CD14-positive monocyte (primary cell): ENCODE measurements at regions of chr5 and their contacts with region 1.

Region 1: DNA sequence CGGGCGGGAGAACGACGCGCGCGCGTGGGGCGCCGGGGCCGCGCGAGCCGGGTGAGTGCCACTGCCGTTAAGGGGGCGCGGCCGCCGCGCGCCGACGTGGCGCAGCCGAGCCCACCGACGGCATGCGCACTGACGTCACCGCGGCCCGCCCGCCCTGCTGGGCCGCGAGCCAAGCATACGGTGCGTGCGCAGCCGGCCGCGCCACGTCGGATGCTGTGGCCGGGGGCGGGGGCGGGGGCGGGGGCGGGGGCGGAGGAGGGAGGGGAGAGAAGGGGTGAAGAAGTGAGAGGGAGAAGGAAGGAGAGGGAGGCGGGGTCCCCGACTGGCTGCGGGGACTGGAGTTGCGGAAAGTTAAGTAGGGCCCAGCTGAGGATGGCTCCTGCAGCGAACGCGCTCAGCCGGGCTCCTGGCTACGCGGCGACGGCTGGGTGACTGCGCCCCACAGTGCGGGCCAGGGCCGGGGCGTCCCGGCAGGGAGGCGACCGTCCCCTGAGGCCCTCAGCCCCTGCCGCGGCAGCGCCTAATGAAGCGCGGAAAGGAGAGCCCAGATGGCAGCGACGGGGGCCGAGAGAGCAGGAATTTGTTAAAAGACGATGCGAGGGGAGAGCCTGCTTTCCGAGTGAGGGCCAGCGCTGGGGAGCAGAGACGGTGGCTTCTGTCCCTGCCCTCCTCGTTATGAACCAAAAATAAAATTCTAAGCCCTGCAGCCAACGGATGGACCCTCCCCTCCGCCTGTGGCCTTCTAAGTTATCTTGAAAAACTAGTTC is at the start of gene DAP:
- DNase-seq: peak; percentile 88 to 91 (median 90)
- H3K4me3 ChIP-seq: peak within 1 kb of the TSS; percentile 71 to 97 (median 85)
- H3K4me3 Mint-ChIP-seq: peak within 1 kb of the TSS; percentile 90 to 97
- H3K27ac ChIP-seq: peak within 1 kb of the TSS; percentile 94 to 99
- H3K27ac Mint-ChIP-seq: peak within 1 kb of the TSS; percentile 98 to 99 (median 98)
- H3K4me1 ChIP-seq: peaks cover 43 to 46% of the 10 kb centered on the region in 2 donors
- H3K4me1 Mint-ChIP-seq: peaks cover 51% of the 10 kb centered on the region
- H3K27me3 ChIP-seq: no peaks in the 10 kb centered on the region
- H3K27me3 Mint-ChIP-seq: peaks cover 0 to 2% (median 1%) of the 10 kb centered on the region in 3 donors
- CTCF ChIP-seq: no peak
- polyA plus RNA-seq, gene DAP: 60.9 to 69.0 (median 62.3) TPM

Region 2: GRCh38 chr5:10384483-10384882 is 376.9 kb before region 1 on chr5:
- intact Hi-C with region 1: no loop called
- DNase-seq: no peak
- H3K4me3 ChIP-seq: no peak overlapping the region
- H3K4me3 Mint-ChIP-seq: no peak overlapping the region
- H3K27ac ChIP-seq: no peak overlapping the region
- H3K27ac Mint-ChIP-seq: no peak overlapping the region
- H3K4me1 ChIP-seq: no peaks in the 10 kb centered on the region
- H3K4me1 Mint-ChIP-seq: peaks cover 9% of the 10 kb centered on the region
- H3K27me3 ChIP-seq: no peaks in the 10 kb centered on the region
- H3K27me3 Mint-ChIP-seq: peaks cover 0 to 1% (median 0%) of the 10 kb centered on the region in 3 donors
- CTCF ChIP-seq: no peak

Region 3: GRCh38 chr5:10452768-10453331 is 308.5 kb before region 1 on chr5:
- intact Hi-C with region 1: loop called in 1 of 2 experiments (anchors 5 kb)
- DNase-seq: peak; percentile 54 to 68 (median 64)
- H3K4me3 ChIP-seq: no peak overlapping the region
- H3K4me3 Mint-ChIP-seq: no peak overlapping the region
- H3K27ac ChIP-seq: no peak overlapping the region
- H3K27ac Mint-ChIP-seq: peak overlapping the region in 2 of 7 donors; percentile 45 to 61
- H3K4me1 ChIP-seq: peaks cover 57 to 62% of the 10 kb centered on the region in 2 donors
- H3K4me1 Mint-ChIP-seq: peaks cover 61% of the 10 kb centered on the region
- H3K27me3 ChIP-seq: no peaks in the 10 kb centered on the region
- H3K27me3 Mint-ChIP-seq: peaks cover 0 to 2% (median 2%) of the 10 kb centered on the region in 3 donors
- CTCF ChIP-seq: peak; percentile 72

Region 4: GRCh38 chr5:10635257-10635866 is 126.0 kb before region 1 on chr5:
- intact Hi-C with region 1: loop called (anchors 5 to 10 kb)
- DNase-seq: peak; percentile 93 to 97 (median 97)
- H3K4me3 ChIP-seq: peak overlapping the region in 1 of 3 experiments; percentile 38
- H3K4me3 Mint-ChIP-seq: peak overlapping the region; percentile 7 to 57
- H3K27ac ChIP-seq: peak overlapping the region; percentile 38 to 98
- H3K27ac Mint-ChIP-seq: peak overlapping the region; percentile 81 to 99 (median 87)
- H3K4me1 ChIP-seq: peaks cover 54 to 58% of the 10 kb centered on the region in 2 donors
- H3K4me1 Mint-ChIP-seq: peaks cover 57% of the 10 kb centered on the region
- H3K27me3 ChIP-seq: no peaks in the 10 kb centered on the region
- H3K27me3 Mint-ChIP-seq: peaks cover 2 to 12% (median 2%) of the 10 kb centered on the region in 3 donors
- CTCF ChIP-seq: no peak

Region 5: DNA sequence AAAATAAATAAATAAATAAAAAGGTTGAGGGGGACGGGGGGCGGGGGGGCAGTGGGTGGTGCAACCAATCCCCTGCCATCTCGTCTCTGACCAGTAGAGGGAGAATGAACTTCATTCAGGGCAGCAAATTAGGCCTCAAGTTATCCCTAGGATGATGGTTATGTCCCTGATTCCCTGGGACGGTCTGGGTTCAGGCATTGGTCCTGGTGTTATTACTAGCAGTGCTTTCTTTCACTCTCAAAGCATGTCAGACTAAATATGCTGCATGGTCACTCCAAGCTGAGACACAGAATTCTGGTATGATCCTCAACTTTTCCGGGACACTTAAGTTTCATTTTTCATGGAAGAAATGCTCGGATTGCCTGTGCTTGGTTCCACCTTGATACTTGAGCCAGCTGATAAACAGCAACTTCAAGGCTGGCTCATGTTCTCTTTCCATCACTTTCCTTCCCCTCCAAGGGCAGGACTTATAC is 59.7 kb before region 1 on chr5:
- intact Hi-C with region 1: loop called in 1 of 2 experiments (anchors 5 kb)
- DNase-seq: peak; percentile 21 to 47 (median 41)
- H3K4me3 ChIP-seq: no peak overlapping the region
- H3K4me3 Mint-ChIP-seq: no peak overlapping the region
- H3K27ac ChIP-seq: no peak overlapping the region
- H3K27ac Mint-ChIP-seq: peak overlapping the region in 2 of 7 donors; percentile 25 to 49
- H3K4me1 ChIP-seq: peaks cover 18 to 23% of the 10 kb centered on the region in 2 donors
- H3K4me1 Mint-ChIP-seq: peaks cover 24% of the 10 kb centered on the region
- H3K27me3 ChIP-seq: no peaks in the 10 kb centered on the region
- H3K27me3 Mint-ChIP-seq: peaks cover 0 to under 1% (median 0%) of the 10 kb centered on the region in 3 donors
- CTCF ChIP-seq: peak; percentile 90

Region 6: GRCh38 chr5:10733426-10733825 is 27.9 kb before region 1 on chr5:
- intact Hi-C with region 1: loop called in 1 of 2 experiments (anchors 2 kb)
- DNase-seq: no peak
- H3K4me3 ChIP-seq: no peak overlapping the region
- H3K4me3 Mint-ChIP-seq: no peak overlapping the region
- H3K27ac ChIP-seq: peak overlapping the region in 1 of 2 donors; percentile 77
- H3K27ac Mint-ChIP-seq: peak overlapping the region; percentile 70 to 92 (median 89)
- H3K4me1 ChIP-seq: peaks cover 29 to 37% of the 10 kb centered on the region in 2 donors
- H3K4me1 Mint-ChIP-seq: peaks cover 59% of the 10 kb centered on the region
- H3K27me3 ChIP-seq: no peaks in the 10 kb centered on the region
- H3K27me3 Mint-ChIP-seq: peaks cover 0 to 2% (median 0%) of the 10 kb centered on the region in 3 donors
- CTCF ChIP-seq: no peak

Region 7: DNA sequence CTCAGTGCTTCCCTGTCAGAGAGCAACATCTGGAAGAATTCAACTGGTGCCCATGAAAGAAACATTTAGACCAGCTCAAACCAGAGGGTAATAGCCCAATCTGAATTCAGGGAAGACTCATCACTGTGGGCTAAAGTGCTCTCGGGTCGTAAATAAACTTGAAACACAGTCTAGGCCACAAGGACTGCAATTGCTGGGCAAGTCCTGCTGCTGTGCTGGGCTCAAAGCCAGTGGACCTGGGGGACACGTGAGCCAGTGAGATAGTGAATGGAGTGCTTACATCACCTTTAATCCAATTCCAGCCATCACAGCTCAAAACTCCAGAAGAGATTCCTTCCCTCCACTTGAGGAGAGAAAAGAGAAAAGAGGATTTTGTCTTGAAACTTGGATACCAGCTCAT is 77.8 kb after region 1 on chr5:
- intact Hi-C with region 1: no loop called
- DNase-seq: no peak
- H3K4me3 ChIP-seq: no peak overlapping the region
- H3K4me3 Mint-ChIP-seq: no peak overlapping the region
- H3K27ac ChIP-seq: no peak overlapping the region
- H3K27ac Mint-ChIP-seq: no peak overlapping the region
- H3K4me1 ChIP-seq: no peaks in the 10 kb centered on the region
- H3K4me1 Mint-ChIP-seq: no peaks in the 10 kb centered on the region
- H3K27me3 ChIP-seq: no peaks in the 10 kb centered on the region
- H3K27me3 Mint-ChIP-seq: peaks cover 0 to 5% (median 3%) of the 10 kb centered on the region in 3 donors
- CTCF ChIP-seq: no peak